CD8-positive, alpha-beta memory T cell (primary cell): ENCODE measurements at regions of chr14 and their contacts with region 1.

Region 1: GRCh38 chr14:106831322-106831720 is 1304.9 kb downstream of the TMEM121 start:
- DNase-seq: peak; percentile 12 to 56 (median 37)
- H3K4me3 ChIP-seq: no peak overlapping the region
- H3K4me3 Mint-ChIP-seq: no peak overlapping the region
- H3K27ac ChIP-seq: no peak overlapping the region
- H3K27ac Mint-ChIP-seq: peak overlapping the region in 1 of 8 donors; percentile 41
- H3K4me1 ChIP-seq: no peaks in the 10 kb centered on the region
- H3K4me1 Mint-ChIP-seq: no peaks in the 10 kb centered on the region
- H3K27me3 ChIP-seq: peaks cover 6% of the 10 kb centered on the region
- H3K27me3 Mint-ChIP-seq: peaks cover 7 to 24% of the 10 kb centered on the region in 2 donors

Region 2: DNA sequence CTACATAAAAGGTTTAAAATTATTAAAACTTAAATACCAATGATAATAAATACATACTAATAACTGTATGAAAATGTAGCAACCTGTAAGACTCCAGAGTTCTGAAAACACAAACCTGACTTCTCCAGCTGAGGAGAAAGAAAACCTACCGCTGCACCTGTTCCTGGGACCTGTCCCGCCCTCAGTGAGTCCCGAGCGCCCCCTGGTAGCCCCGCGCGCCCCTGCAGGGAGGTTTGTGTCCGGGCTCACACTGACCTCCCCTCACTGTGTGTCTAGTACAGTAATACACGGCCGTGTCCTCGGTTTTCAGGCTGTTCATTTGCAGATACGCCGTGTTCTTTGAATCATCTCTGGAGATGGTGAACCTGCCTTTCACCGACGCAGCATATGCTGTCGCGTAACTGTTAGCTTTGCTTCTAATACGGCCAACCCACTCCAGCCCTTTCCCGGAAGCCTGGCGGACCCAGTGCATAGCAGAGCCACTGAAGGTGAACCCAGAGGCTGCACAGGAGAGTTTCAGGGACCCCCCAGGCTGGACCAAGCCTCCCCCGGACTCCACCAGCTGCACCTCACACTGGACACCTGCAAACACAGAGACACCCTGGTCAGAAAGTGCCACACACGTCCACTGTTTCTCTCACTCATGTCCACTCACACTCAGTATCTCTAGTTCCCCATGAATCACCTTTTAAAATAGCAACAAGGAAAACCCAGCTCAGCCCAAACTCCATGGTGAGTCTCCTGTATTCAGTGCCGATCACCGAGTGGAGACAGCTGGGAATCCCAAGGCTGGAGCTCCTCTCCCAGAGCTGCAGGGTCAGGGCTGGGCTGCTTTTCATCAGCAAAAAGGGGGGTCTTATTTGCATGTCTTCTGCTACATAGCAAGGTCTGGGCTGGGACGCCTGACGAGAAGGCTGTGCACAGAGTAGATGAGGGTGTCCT is 28.6 kb before region 1 on chr14:
- CTCF ChIA-PET with region 1: no interaction called
- POLR2A ChIA-PET with region 1: no interaction called
- DNase-seq: no peak
- H3K4me3 ChIP-seq: no peak overlapping the region
- H3K4me3 Mint-ChIP-seq: no peak overlapping the region
- H3K27ac ChIP-seq: no peak overlapping the region
- H3K27ac Mint-ChIP-seq: no peak overlapping the region
- H3K4me1 ChIP-seq: no peaks in the 10 kb centered on the region
- H3K4me1 Mint-ChIP-seq: peaks cover 0 to 1% (median 0%) of the 10 kb centered on the region in 3 donors
- H3K27me3 ChIP-seq: peaks cover 3% of the 10 kb centered on the region
- H3K27me3 Mint-ChIP-seq: peaks cover 32 to 79% of the 10 kb centered on the region in 2 donors

Region 3: GRCh38 chr14:106821119-106821518 is 10.2 kb before region 1 on chr14:
- CTCF ChIA-PET with region 1: interaction called, 12 read pairs
- POLR2A ChIA-PET with region 1: no interaction called
- DNase-seq: no peak
- H3K4me3 ChIP-seq: no peak overlapping the region
- H3K4me3 Mint-ChIP-seq: no peak overlapping the region
- H3K27ac ChIP-seq: no peak overlapping the region
- H3K27ac Mint-ChIP-seq: no peak overlapping the region
- H3K4me1 ChIP-seq: no peaks in the 10 kb centered on the region
- H3K4me1 Mint-ChIP-seq: no peaks in the 10 kb centered on the region
- H3K27me3 ChIP-seq: no peaks in the 10 kb centered on the region
- H3K27me3 Mint-ChIP-seq: peaks cover 18 to 61% of the 10 kb centered on the region in 2 donors

Region 4: GRCh38 chr14:106844608-106845285 is 13.4 kb after region 1 on chr14:
- CTCF ChIA-PET with region 1: interaction called, 27 read pairs
- POLR2A ChIA-PET with region 1: no interaction called
- DNase-seq: peak; percentile 50 to 79 (median 71)
- H3K4me3 ChIP-seq: peak overlapping the region; percentile 91
- H3K4me3 Mint-ChIP-seq: peak overlapping the region; percentile 94 to 98 (median 97)
- H3K27ac ChIP-seq: peak overlapping the region; percentile 60
- H3K27ac Mint-ChIP-seq: peak overlapping the region; percentile 81 to 97 (median 94)
- H3K4me1 ChIP-seq: peaks cover 8% of the 10 kb centered on the region
- H3K4me1 Mint-ChIP-seq: peaks cover 24 to 36% (median 32%) of the 10 kb centered on the region in 3 donors
- H3K27me3 ChIP-seq: no peaks in the 10 kb centered on the region
- H3K27me3 Mint-ChIP-seq: peaks cover 4 to 5% of the 10 kb centered on the region in 2 donors